Ascending aorta (tissue), 2 donors: ENCODE measurements at regions of chr3 and their contacts with region 1.

Region 1: DNA sequence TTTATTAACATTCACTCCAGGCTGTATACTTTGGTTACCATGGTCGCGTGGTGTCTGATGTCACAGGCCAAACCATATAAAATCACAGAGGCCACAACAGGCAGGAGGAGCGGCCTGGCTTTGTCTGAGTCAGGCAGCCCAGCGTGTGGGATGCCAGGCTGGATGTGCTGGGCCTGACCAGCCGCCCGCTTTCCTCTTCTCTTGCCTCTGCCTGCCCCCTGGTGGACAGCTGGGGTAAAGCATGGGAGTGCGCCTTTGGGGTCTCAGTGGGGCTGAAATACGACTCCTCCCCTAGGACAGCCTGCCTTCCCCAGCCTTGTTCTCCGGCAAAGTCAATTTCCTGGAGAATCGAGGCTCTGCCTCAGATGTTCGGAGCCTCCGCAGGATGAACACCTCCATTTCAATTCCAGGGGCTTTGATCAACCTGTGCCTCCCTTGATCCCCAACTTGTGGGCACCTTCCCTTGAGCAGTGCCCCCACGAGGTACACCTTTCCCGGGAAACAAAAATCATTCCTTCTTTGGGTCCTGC is 78.2 kb downstream of the CCNL1 start:
- DNase-seq: peak; percentile 80 to 96
- H3K4me3 ChIP-seq: no peak overlapping the region
- H3K27ac ChIP-seq: peak overlapping the region; percentile 5 to 25
- H3K4me1 ChIP-seq: peaks cover 7 to 10% of the 10 kb centered on the region in 2 donors
- H3K27me3 ChIP-seq: no peaks in the 10 kb centered on the region
- CTCF ChIP-seq: peak; percentile 94 to 97 (median 96)

Region 2: GRCh38 chr3:155870133-155870944 is 1211.4 kb before region 1 on chr3 and contains the start of gene GMPS:
- intact Hi-C with region 1: loop called (anchors 10 kb)
- DNase-seq: peak; percentile 87 to 97
- H3K4me3 ChIP-seq: peak within 1 kb of the TSS; percentile 77 to 90
- H3K27ac ChIP-seq: peak within 1 kb of the TSS; percentile 96 to 98
- H3K4me1 ChIP-seq: peaks cover 0 to 25% of the 10 kb centered on the region in 2 donors
- H3K27me3 ChIP-seq: no peaks in the 10 kb centered on the region
- CTCF ChIP-seq: peak; percentile 35 to 62 (median 60)
- total RNA-seq, gene GMPS: 17.8 TPM

Region 3: GRCh38 chr3:156307704-156308103 is 774.0 kb before region 1 on chr3:
- intact Hi-C with region 1: loop called (anchors 10 kb)
- DNase-seq: peak; percentile 26 to 90
- H3K4me3 ChIP-seq: no peak overlapping the region
- H3K27ac ChIP-seq: peak overlapping the region in 1 of 2 donors; percentile 5
- H3K4me1 ChIP-seq: peaks cover 0 to 33% of the 10 kb centered on the region in 2 donors
- H3K27me3 ChIP-seq: no peaks in the 10 kb centered on the region
- CTCF ChIP-seq: no peak

Region 4: DNA sequence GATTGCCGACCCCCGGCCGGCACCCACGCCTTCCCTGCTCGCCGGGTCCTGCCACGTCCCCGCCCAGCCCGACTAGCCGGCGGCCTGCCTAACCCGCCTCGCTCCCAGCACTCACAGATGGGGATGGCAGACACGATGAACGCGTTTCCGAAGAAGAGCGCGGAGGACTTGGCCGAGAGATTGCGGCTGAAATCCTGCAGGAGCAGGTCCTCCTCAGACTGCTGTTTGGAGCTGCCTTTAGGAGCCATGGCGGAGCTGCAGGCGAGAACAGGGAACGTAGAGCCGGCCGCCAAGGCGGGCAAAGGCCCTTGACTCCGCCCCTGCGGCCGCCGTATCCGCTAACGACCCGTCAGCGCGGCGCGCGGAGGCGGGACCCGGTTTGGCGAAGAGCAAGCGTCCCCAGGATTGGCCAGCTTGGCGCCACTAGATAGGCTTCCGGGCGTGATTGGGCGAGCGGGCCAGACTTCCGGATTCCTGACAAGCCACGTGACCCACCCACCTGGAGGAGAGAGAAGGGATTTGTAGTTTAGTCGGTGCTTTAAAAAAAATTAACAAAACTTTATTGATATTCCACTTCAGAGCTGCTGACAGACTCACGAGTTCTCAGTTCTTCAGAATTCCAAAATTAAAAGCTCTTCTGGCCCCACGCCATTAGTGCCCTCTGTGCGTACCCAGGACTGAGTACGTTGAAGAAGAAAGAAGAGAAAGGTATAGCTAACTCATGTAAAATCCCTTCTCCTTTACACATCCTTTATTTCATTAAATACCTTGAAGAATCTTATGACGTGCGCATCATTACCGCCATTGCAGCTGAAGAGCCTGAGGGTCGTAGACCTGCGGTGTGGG is 526.7 kb before region 1 on chr3 and contains the start of gene SSR3:
- intact Hi-C with region 1: loop called (anchors 2 kb)
- DNase-seq: peak; percentile 98 to 100
- H3K4me3 ChIP-seq: peak within 1 kb of the TSS; percentile 84 to 95
- H3K27ac ChIP-seq: peak within 1 kb of the TSS; percentile 71 to 83
- H3K4me1 ChIP-seq: peaks cover 0 to 11% of the 10 kb centered on the region in 2 donors
- H3K27me3 ChIP-seq: no peaks in the 10 kb centered on the region
- CTCF ChIP-seq: peak in 1 of 3 experiments; percentile 54
- total RNA-seq, gene SSR3: 155 TPM

Region 5: DNA sequence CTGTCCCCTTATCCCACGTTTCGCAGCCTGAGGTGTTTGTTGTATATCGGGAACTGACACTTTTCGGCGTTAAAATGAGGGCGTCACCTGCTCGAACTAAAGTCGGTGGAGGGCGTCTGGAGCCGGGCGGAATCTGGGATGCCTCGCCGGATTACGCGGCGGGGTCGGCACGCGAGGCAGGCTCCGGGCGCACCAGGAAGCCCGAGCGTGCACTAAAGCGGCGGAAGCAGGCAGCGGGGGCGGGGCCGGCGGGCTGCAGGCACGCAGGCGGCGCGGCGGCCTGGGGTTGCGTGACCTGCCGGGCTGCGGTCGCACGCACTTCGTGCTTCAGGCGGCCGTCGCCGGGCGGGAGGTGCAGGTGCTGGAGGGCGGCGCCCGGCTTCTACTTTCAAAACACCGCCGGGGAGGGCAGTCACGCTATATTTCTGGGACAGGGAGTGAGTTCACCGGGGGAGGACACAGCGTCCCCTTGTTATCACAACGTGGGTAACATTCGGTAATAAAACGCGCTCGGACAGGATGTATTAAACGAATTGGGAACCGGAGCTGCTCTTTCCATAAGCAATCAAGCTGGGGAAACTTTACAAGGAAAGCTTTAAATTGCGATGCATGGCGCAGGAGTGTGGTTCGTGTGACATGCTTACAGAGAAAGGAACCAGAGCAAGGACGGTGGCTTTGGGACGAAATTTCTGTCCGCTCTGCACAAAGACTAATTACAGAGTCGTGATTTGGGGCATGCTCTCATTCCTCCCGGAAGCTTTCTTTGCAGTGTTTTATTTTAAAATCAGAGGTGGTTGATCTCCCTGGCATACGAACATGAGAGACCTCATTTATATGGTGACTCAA is 264.7 kb before region 1 on chr3:
- intact Hi-C with region 1: loop called (anchors 5 kb)
- DNase-seq: peak; percentile 20 to 90
- H3K4me3 ChIP-seq: peak overlapping the region; percentile 66 to 67
- H3K27ac ChIP-seq: peak overlapping the region; percentile 58 to 74
- H3K4me1 ChIP-seq: no peaks in the 10 kb centered on the region
- H3K27me3 ChIP-seq: no peaks in the 10 kb centered on the region
- CTCF ChIP-seq: peak in 1 of 3 experiments; percentile 16

Region 6: DNA sequence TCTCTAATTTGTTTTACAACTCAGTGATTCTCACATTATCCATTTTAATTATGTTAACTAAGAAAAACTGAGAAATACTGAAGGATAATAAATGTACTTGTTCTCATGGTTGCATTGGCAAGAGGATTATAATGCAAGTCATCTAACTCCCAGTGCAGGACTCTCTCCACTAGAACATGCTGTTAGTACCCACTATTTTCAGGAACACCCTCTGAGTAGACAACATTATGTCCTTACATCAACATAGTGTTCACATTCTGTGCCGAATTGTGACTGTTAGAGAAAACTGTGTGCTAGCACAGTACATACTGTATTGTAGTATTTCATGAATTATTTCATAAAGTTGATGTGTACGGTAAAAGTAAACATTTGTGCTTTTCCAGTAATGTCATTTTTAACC is 175.5 kb before region 1 on chr3:
- intact Hi-C with region 1: loop called (anchors 5 kb)
- DNase-seq: no peak
- H3K4me3 ChIP-seq: no peak overlapping the region
- H3K27ac ChIP-seq: no peak overlapping the region
- H3K4me1 ChIP-seq: no peaks in the 10 kb centered on the region
- H3K27me3 ChIP-seq: no peaks in the 10 kb centered on the region
- CTCF ChIP-seq: no peak

Region 7: GRCh38 chr3:157113832-157114505 is 32.2 kb after region 1 on chr3:
- intact Hi-C with region 1: no loop called
- DNase-seq: no peak
- H3K4me3 ChIP-seq: no peak overlapping the region
- H3K27ac ChIP-seq: no peak overlapping the region
- H3K4me1 ChIP-seq: no peaks in the 10 kb centered on the region
- H3K27me3 ChIP-seq: no peaks in the 10 kb centered on the region
- CTCF ChIP-seq: no peak

Region 8: DNA sequence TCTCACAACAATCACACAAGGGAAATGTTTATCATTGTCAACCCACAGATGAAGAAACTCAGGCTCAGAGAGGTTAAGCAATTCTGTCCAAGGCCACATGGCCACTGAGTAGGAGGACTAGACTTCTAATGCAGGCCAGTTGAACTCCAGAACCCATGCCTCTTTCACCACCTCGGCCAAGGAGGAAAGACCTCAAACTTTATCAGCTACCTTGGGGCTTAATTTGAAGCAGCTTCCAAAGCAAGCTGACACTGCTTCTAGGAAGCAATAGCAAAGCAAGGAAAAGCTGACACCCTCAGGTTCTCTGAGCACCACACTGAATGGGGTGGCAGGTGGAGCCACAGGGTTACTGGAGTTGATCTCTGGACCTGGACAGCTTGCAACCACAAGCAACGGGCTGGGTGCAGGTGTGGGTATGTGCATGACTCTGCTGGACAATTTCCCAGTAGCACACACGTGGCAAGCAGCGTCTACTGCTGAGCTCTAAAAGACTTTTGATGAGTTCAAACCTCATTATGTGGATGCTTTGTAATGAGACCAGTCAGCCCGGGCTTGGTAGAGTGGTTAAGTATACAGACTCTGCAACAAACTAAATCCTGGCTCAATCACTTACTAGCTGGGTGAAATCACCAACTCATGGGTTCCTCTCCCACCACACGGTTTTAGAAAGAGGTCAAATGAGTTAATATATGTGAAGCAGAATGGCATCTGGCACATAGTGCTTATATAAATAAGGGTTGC is 55.1 kb after region 1 on chr3:
- intact Hi-C with region 1: loop called (anchors 1 kb)
- DNase-seq: no peak
- H3K4me3 ChIP-seq: no peak overlapping the region
- H3K27ac ChIP-seq: peak overlapping the region; percentile 23 to 62
- H3K4me1 ChIP-seq: peaks cover 14 to 20% of the 10 kb centered on the region in 2 donors
- H3K27me3 ChIP-seq: no peaks in the 10 kb centered on the region
- CTCF ChIP-seq: no peak

Region 9: GRCh38 chr3:157156837-157157635 is 75.3 kb after region 1 on chr3:
- intact Hi-C with region 1: no loop called
- DNase-seq: no peak
- H3K4me3 ChIP-seq: peak overlapping the region; percentile 86 to 100
- H3K27ac ChIP-seq: peak overlapping the region in 1 of 2 donors; percentile 22
- H3K4me1 ChIP-seq: peaks cover 10 to 50% of the 10 kb centered on the region in 2 donors
- H3K27me3 ChIP-seq: no peaks in the 10 kb centered on the region
- CTCF ChIP-seq: no peak